ENCODE measurements at regions of chr3 and their contacts with region 1.

Region 1: DNA sequence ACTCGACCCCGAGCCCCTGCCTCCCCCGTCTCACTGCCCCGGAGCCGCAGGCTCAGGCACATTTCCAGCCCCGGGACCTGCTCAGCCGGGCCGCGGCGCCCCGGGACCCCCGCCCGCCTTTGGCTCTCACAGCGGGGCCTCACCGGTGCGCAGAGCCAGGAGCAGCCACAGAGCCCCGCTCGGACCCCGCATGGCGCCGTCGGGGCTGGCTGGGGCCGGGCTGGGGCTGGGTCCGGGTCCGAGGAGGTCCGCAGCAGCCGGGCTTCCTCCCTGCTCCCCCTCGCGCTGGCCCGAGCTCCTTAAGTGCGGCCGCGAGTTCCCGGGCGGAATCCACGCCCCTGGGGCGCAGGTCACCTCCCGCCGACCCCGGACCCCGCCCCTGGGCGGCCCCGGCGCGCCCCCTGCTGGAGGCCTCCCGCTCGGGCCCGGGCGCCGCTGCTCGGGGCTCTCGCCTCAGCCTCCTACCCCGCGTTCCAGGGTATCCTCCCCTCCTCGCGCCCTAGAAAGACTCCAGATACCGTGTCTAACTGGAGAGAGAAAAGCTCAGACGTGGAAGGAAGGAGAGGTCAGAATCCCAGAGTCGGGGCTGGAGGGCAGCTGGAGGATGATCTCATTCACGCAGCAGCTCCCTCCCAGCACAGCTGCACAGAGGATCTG is at the start of gene MELTF:
- DNase-seq: peak; percentile 21
- H3K4me3 ChIP-seq: peak within 1 kb of the TSS; percentile 47
- H3K27ac ChIP-seq: no peak within 1 kb of the TSS
- H3K27me3 ChIP-seq: peaks cover 8% of the 10 kb centered on the region
- CTCF ChIP-seq: peak; percentile 48
- polyA plus RNA-seq, gene MELTF: 0.51 and 0.55 TPM in 2 replicates

Region 2: DNA sequence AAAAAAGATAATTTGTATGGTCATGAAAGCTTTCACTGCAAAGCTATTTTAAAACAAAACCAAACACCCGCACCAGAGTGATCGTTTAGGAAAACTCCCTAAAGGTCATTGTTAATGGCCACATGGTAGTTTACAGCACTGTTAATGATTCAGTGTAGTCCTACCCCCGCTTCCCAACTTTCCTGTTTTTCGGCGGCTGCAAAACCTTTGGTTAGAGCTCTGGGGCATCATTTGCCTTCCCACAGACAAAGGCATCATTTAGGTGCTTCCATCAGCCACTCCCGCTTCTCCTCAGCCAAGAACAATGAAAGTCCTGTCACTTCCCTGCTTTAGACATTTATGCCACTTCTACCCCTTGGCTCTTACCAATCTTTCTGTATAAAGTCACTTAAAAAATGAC is 10.6 kb before region 1 on chr3:
- CTCF ChIA-PET with region 1: interaction called, 14 read pairs
- POLR2A ChIA-PET with region 1: interaction called, 3 read pairs
- DNase-seq: no peak
- H3K4me3 ChIP-seq: no peak overlapping the region
- H3K27ac ChIP-seq: no peak overlapping the region
- H3K27me3 ChIP-seq: peaks cover 35% of the 10 kb centered on the region
- CTCF ChIP-seq: no peak

Region 3: GRCh38 chr3:197041875-197042488 is 12.3 kb after region 1 on chr3:
- CTCF ChIA-PET with region 1: interaction called, 44 read pairs
- POLR2A ChIA-PET with region 1: no interaction called
- DNase-seq: no peak
- H3K4me3 ChIP-seq: no peak overlapping the region
- H3K27ac ChIP-seq: no peak overlapping the region
- H3K27me3 ChIP-seq: no peaks in the 10 kb centered on the region
- CTCF ChIP-seq: no peak

Region 4: DNA sequence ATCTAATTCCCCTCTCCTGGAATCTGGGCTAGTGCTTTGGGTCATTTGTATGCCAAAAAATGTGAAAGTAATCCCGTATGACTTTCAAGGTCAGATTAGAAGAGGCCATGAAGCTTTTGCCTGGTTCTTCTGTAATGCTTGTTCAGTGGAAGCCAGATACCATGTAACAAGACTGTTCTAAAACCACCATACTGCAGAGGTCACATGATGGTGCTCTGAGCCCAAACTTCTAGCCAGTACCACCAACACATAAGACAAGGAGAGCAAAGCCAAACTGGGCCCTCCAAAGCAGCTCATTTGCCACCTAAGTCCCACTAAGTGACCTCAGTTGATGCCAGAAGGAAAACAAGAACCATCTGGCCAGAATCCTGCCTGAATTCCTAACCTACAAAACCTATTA is 64.2 kb after region 1 on chr3:
- CTCF ChIA-PET with region 1: interaction called, 11 read pairs
- POLR2A ChIA-PET with region 1: no interaction called
- DNase-seq: no peak
- H3K4me3 ChIP-seq: no peak overlapping the region
- H3K27ac ChIP-seq: no peak overlapping the region
- H3K27me3 ChIP-seq: no peaks in the 10 kb centered on the region
- CTCF ChIP-seq: no peak